Dendritic cell treated with granulocyte-macrophage colony-stimulating factor and Interleukin-4, amounts not matched to agents 40 ng/mL and 50 ng/mL, for 4 days (primary cell): ENCODE measurements at regions of chr15 and their contacts with region 1.

Region 1: GRCh38 chr15:99755692-99756409 is 22.6 kb upstream of the LYSMD4 start:
- H3K4me3 Mint-ChIP-seq: no peak overlapping the region
- H3K27ac Mint-ChIP-seq: no peak overlapping the region
- H3K4me1 Mint-ChIP-seq: no peaks in the 10 kb centered on the region
- H3K27me3 Mint-ChIP-seq: no peaks in the 10 kb centered on the region

Region 2: DNA sequence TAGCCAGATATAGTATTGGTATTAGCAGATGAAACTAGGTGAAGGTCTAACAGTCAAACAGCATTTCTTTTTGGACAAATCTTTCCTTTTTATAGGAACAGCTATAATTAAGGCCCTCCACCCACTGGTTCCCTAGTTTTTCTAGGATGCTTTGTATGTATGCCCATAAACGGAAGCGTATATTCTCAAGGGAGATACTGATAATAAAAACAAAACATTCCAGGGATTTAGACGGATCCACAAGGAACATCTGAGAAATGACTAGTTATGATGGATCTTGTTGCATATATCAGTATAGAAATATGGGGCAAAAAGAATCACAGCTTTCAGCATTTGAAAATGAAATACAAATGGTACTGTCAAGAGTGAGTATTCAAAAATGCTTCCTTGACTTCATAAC is 482.1 kb before region 1 on chr15:
- intact Hi-C with region 1: loop called (anchors 1 kb)
- H3K4me3 Mint-ChIP-seq: no peak overlapping the region
- H3K27ac Mint-ChIP-seq: no peak overlapping the region
- H3K4me1 Mint-ChIP-seq: no peaks in the 10 kb centered on the region
- H3K27me3 Mint-ChIP-seq: no peaks in the 10 kb centered on the region